Activated CD8-positive, alpha-beta T cell treated with anti-CD3 and anti-CD28 coated beads for 36 hours (primary cell): ENCODE measurements at regions of chr1 and their contacts with region 1.

Region 1: GRCh38 chr1:168535536-168535935 is 8.3 kb downstream of the XCL2 start:
- DNase-seq: peak; percentile 44
- ATAC-seq: peak; percentile 75
- H3K4me3 Mint-ChIP-seq: peak overlapping the region; percentile 50
- H3K27ac Mint-ChIP-seq: peak overlapping the region; percentile 86
- H3K4me1 Mint-ChIP-seq: peaks cover 73% of the 10 kb centered on the region
- H3K27me3 Mint-ChIP-seq: no peaks in the 10 kb centered on the region
- CTCF ChIP-seq: no peak

Region 2: GRCh38 chr1:168520052-168520751 is 15.3 kb before region 1 on chr1:
- CTCF ChIA-PET with region 1: interaction called, 9 read pairs
- POLR2A ChIA-PET with region 1: interaction called, 3 read pairs
- intact Hi-C with region 1: loop called (anchors 2 kb)
- DNase-seq: peak; percentile 86
- ATAC-seq: peak; percentile 96
- H3K4me3 Mint-ChIP-seq: peak overlapping the region; percentile 72
- H3K27ac Mint-ChIP-seq: peak overlapping the region; percentile 94
- H3K4me1 Mint-ChIP-seq: peaks cover 62% of the 10 kb centered on the region
- H3K27me3 Mint-ChIP-seq: no peaks in the 10 kb centered on the region
- CTCF ChIP-seq: no peak